ENCODE measurements at regions of chr12 and their contacts with region 1.

Region 1: DNA sequence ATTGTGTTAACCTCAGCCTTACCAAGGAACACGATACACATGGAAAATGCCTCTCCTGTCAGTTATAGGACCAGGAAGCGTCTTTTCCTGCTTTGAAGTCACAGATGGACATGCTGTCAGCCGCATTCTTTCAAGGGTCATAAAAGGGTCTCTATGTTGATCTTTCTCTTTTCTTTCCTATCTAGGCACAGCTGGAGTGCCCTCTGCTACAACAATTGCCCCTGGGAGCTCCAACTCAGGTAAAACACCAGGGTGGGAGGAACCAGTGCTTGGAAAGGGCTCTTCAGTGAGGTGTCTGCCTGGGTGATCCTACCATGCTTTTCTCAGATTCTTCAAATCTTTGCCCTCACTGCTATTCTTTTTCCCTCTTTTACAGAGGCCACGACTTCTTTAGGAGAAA is 157.4 kb upstream of the CNTN1 start:
- DNase-seq: no peak
- H3K4me3 ChIP-seq: no peak overlapping the region
- H3K27ac ChIP-seq: no peak overlapping the region
- H3K4me1 ChIP-seq: no peaks in the 10 kb centered on the region
- CTCF ChIP-seq: no peak

Region 2: GRCh38 chr12:40752011-40752410 is 217.2 kb after region 1 on chr12:
- CTCF ChIA-PET with region 1: no interaction called
- POLR2A ChIA-PET with region 1: interaction called, 10 read pairs
- intact Hi-C with region 1: no loop called
- DNase-seq: no peak
- H3K4me3 ChIP-seq: no peak overlapping the region
- H3K27ac ChIP-seq: no peak overlapping the region
- H3K4me1 ChIP-seq: no peaks in the 10 kb centered on the region
- CTCF ChIP-seq: no peak